Activated CD4-positive, alpha-beta T cell treated with anti-CD3 and anti-CD28 coated beads for 36 hours (primary cell): ENCODE measurements at regions of chr19 and their contacts with region 1.

Region 1: GRCh38 chr19:9140159-9140874 is at the start of gene ZNF317:
- DNase-seq: peak; percentile 94
- ATAC-seq: peak; percentile 93
- H3K4me3 Mint-ChIP-seq: peak within 1 kb of the TSS; percentile 99
- H3K27ac Mint-ChIP-seq: peak within 1 kb of the TSS; percentile 96
- H3K4me1 Mint-ChIP-seq: peaks cover 38% of the 10 kb centered on the region
- H3K27me3 Mint-ChIP-seq: peaks cover 1% of the 10 kb centered on the region
- total RNA-seq, gene ZNF317: 39.0 to 39.8 TPM

Region 2: DNA sequence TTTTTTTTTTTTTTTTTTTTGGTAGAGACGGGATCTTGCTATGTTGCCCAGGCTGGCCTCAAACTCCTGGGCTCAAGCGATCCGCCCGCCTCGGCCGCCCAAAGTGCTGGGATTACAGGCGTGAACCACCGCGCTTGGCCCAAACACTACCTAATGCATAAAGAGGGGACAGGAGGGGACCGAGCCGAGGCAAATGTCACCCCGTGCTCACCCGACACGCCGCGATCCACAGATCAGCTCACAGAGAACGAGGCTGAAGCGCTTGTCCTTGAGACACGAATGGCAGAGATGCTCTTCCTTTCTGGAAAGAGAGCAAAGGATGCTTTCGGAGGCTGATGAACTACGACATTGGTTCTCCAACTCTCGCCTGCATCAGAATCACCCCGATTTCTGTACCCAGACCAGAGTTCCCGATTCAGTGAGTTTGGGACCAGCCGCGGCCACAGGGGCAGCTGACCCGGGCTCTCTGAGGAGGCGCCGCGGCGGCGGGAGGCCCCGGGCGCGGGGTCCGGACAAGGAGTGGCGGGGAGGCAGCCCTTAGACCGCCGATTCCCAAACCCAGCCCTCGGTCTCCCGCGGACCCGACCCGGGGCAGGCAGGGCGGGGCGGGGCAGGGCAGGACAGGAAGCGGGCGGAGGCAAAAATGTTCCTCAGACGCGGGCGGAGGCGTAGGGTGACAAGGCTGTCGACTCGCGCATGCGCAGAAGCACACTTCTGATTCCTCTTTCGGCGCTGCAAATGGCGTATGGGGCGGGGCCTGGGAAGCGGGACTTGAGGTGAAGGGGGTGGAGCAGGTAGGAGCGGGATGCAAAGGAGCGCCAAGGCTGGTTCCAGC is 169.0 kb after region 1 on chr19 and contains the start of gene ZNF699:
- CTCF ChIA-PET with region 1: no interaction called
- POLR2A ChIA-PET with region 1: no interaction called
- intact Hi-C with region 1: loop called (anchors 1 to 10 kb)
- DNase-seq: peak; percentile 100
- ATAC-seq: peak; percentile 90
- H3K4me3 Mint-ChIP-seq: peak within 1 kb of the TSS; percentile 97
- H3K27ac Mint-ChIP-seq: peak within 1 kb of the TSS; percentile 97
- H3K4me1 Mint-ChIP-seq: peaks cover 13% of the 10 kb centered on the region
- H3K27me3 Mint-ChIP-seq: no peaks in the 10 kb centered on the region
- total RNA-seq, gene ZNF699: 6.7 to 7.1 TPM

Region 3: GRCh38 chr19:9435279-9436268 is 295.3 kb after region 1 on chr19 and contains the start of gene ZNF266:
- CTCF ChIA-PET with region 1: no interaction called
- POLR2A ChIA-PET with region 1: no interaction called
- intact Hi-C with region 1: loop called (anchors 1 kb)
- DNase-seq: peak; percentile 97
- ATAC-seq: peak; percentile 91
- H3K4me3 Mint-ChIP-seq: peak within 1 kb of the TSS; percentile 95
- H3K27ac Mint-ChIP-seq: peak within 1 kb of the TSS; percentile 99
- H3K4me1 Mint-ChIP-seq: peaks cover 33% of the 10 kb centered on the region
- H3K27me3 Mint-ChIP-seq: no peaks in the 10 kb centered on the region
- total RNA-seq, gene ZNF266: 17.1 to 22.4 TPM

Region 4: DNA sequence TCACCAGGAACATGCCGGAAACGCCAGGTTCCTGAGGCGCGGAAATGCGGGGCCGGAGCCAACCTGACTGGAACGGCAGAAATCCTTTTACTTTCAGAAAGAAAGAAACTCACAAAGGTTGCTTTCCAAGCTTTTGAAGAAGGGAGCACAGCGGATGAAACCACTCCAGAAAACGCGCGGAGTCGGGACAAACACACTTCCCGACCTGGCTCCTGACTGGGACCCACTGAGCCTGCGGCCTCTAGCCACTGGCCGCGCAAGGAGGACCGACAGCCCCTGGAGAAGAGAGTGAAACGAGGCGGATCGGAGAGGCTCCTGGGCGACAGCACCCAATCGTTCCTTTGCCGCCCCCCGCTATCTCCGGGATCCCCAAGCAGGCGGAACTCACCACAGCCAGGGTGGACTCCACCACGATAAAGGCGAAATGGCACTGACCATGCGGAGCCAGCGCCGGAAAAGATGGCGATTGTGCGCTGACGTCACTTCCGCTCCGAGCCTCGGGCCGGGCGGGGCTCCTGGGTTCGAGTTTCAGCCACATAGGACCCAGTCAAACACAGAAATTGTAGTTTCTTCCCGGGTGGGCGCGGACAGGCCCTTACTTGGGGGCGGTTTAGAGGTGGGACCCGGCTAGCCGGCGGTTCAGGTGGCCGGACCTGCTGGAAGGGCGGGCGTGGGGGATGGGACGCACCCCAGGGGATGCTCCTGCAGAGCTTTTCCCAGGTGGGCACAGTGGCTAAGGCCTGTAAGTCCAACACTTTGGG is 443.9 kb after region 1 on chr19 and contains the start of gene ZNF121:
- CTCF ChIA-PET with region 1: no interaction called
- POLR2A ChIA-PET with region 1: no interaction called
- intact Hi-C with region 1: loop called in 1 of 2 experiments (anchors 1 kb)
- DNase-seq: peak; percentile 91
- ATAC-seq: peak; percentile 82
- H3K4me3 Mint-ChIP-seq: peak within 1 kb of the TSS; percentile 93
- H3K27ac Mint-ChIP-seq: peak within 1 kb of the TSS; percentile 94
- H3K4me1 Mint-ChIP-seq: peaks cover 29% of the 10 kb centered on the region
- H3K27me3 Mint-ChIP-seq: peaks cover 4% of the 10 kb centered on the region
- total RNA-seq, gene ZNF121: 71.4 to 75.3 TPM

Region 5: GRCh38 chr19:9818734-9819589 is 678.6 kb after region 1 on chr19 and contains the start of gene FBXL12:
- CTCF ChIA-PET with region 1: no interaction called
- POLR2A ChIA-PET with region 1: no interaction called
- intact Hi-C with region 1: loop called in 1 of 2 experiments (anchors 2 kb)
- DNase-seq: peak; percentile 100
- ATAC-seq: peak; percentile 92
- H3K4me3 Mint-ChIP-seq: peak within 1 kb of the TSS; percentile 88
- H3K27ac Mint-ChIP-seq: peak within 1 kb of the TSS; percentile 90
- H3K4me1 Mint-ChIP-seq: peaks cover 26% of the 10 kb centered on the region
- H3K27me3 Mint-ChIP-seq: no peaks in the 10 kb centered on the region
- total RNA-seq, gene FBXL12: 19.9 to 22.5 TPM

Region 6: DNA sequence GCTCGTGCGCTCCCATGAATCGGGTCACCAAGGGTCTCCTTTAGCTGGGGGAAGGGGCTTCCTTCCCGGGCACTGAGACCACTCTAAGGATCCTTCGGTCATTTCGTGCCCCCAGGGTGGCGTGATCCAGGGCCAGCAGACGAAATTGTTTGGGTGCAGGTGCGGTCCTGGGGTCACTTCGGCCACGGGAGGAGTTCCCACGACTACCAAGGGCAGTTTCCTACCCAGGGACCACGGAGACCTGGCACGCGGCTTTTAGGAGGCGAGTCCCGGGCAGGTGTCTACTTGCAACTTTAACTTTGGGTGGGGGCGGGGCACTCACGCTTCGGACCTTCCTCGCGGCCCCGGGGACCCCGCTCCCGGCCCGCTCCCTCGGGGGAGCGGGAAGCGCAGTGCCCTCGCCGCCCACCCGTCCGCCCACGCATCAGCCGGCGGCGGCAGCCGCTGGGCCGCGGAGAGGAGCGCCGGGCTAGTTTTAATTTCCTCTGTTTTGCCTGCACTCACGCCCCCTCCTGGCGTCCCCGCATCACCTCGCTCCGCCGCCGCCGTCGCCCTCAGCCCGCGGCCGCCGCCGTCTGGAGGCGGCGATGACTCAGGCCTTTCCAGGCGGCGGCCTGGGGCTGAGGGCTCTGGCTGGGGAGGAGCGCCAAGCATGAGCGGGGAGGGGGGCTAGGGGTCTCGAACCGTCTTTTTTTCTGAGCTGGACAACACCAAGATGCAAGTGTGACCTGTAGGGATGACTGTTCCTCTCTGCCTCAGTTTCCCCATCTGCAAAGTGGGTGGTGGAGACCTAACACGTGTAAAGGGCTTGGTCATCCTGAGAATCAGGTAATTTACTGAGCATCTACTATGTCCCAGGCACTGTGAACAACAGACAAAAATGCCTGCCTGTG is 774.2 kb after region 1 on chr19:
- CTCF ChIA-PET with region 1: no interaction called
- POLR2A ChIA-PET with region 1: no interaction called
- intact Hi-C with region 1: loop called in 1 of 2 experiments (anchors 1 kb)
- DNase-seq: peak; percentile 93
- ATAC-seq: peak; percentile 97
- H3K4me3 Mint-ChIP-seq: peak overlapping the region; percentile 53
- H3K27ac Mint-ChIP-seq: no peak overlapping the region
- H3K4me1 Mint-ChIP-seq: peaks cover 3% of the 10 kb centered on the region
- H3K27me3 Mint-ChIP-seq: peaks cover 27% of the 10 kb centered on the region